CD4-positive, alpha-beta memory T cell (primary cell): ENCODE measurements at regions of chr1 and their contacts with region 1.

Region 1: DNA sequence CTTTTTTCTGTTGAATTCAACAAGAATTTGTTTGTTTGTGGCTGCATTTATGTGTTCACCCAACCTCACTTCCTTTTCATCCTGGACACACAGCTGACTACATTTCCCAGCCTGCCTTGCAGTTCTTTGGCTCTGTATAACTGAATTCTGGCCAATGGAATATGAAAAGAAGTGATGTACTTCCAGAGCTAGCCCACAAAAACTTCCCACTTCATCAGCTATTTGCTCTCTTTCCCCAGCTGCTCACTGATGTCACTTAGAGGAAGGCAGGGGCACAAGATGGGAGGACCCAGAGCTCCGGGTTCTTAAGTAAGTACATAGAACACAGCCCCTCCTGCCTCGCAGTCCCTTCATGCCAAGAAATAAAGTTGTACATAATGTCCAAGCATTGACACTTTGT is 235.0 kb upstream of the FGGY start:
- DNase-seq: no peak
- H3K4me3 ChIP-seq: no peak overlapping the region
- H3K4me3 Mint-ChIP-seq: no peak overlapping the region
- H3K27ac ChIP-seq: no peak overlapping the region
- H3K27ac Mint-ChIP-seq: peak overlapping the region in 1 of 7 donors; percentile 59
- H3K4me1 ChIP-seq: peaks cover 19% of the 10 kb centered on the region
- H3K4me1 Mint-ChIP-seq: peaks cover 15 to 36% (median 28%) of the 10 kb centered on the region in 4 donors
- H3K27me3 ChIP-seq: no peaks in the 10 kb centered on the region
- H3K27me3 Mint-ChIP-seq: no peaks in the 10 kb centered on the region

Region 2: DNA sequence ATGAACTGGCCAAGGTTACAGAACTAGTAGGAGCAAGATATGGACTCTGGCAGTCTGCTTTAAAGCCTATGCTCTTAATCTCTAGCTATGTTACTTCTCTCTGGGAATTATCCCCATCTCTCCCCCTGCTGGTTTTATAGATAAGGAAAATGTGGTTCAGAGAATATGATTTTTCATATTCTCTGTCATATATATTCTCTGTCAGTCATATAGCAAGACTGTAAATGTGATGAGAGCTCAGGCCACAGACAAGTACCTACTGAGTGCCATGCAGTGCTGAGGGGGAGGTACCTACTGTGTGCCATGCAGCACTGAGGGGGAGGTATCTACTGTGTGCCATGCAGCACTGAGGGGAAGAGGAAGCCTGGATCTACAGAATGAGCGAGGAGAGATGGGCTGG is 14.7 kb after region 1 on chr1:
- CTCF ChIA-PET with region 1: interaction called, 13 read pairs
- POLR2A ChIA-PET with region 1: no interaction called
- intact Hi-C with region 1: no loop called
- DNase-seq: no peak
- H3K4me3 ChIP-seq: no peak overlapping the region
- H3K4me3 Mint-ChIP-seq: no peak overlapping the region
- H3K27ac ChIP-seq: no peak overlapping the region
- H3K27ac Mint-ChIP-seq: peak overlapping the region in 1 of 7 donors; percentile 43
- H3K4me1 ChIP-seq: peaks cover 12% of the 10 kb centered on the region
- H3K4me1 Mint-ChIP-seq: peaks cover 8 to 16% (median 12%) of the 10 kb centered on the region in 4 donors
- H3K27me3 ChIP-seq: no peaks in the 10 kb centered on the region
- H3K27me3 Mint-ChIP-seq: peaks cover 0 to 5% of the 10 kb centered on the region in 2 donors